Colonic mucosa (tissue), 4 donors: ENCODE measurements at regions of chr3 and their contacts with region 1.

Region 1: DNA sequence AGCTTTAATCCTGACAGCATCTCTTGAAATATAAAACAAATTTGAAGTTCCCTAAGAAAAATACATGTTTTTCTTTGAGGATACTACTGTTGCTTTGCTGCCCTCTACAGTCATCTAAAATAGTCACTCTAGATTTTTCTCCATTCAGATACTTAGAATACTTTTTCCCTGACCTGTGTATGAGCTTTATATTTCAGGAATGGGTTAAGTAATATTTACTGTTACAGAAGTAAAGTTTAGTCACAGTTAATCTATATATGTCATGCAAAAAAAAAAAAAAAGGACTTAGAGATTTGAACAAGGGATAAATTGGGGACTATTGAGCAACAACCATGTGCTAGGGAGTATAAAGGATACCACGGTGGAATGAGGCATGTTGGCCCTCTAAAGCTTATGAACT is 8.8 kb downstream of the NECTIN3 start:
- DNase-seq: no peak
- H3K4me3 ChIP-seq: no peak overlapping the region
- H3K27ac ChIP-seq: no peak overlapping the region
- H3K4me1 ChIP-seq: no peaks in the 10 kb centered on the region
- H3K27me3 ChIP-seq: no peaks in the 10 kb centered on the region
- CTCF ChIP-seq: peak; percentile 39

Region 2: GRCh38 chr3:109731620-109732473 is 1348.6 kb before region 1 on chr3:
- intact Hi-C with region 1: loop called (anchors 5 kb)
- DNase-seq: peak; percentile 60
- H3K4me3 ChIP-seq: no peak overlapping the region
- H3K27ac ChIP-seq: no peak overlapping the region
- H3K4me1 ChIP-seq: no peaks in the 10 kb centered on the region
- H3K27me3 ChIP-seq: no peaks in the 10 kb centered on the region
- CTCF ChIP-seq: peak; percentile 85

Region 3: GRCh38 chr3:110314512-110315114 is 765.8 kb before region 1 on chr3:
- intact Hi-C with region 1: loop called (anchors 10 kb)
- DNase-seq: peak; percentile 69
- H3K4me3 ChIP-seq: no peak overlapping the region
- H3K27ac ChIP-seq: no peak overlapping the region
- H3K4me1 ChIP-seq: no peaks in the 10 kb centered on the region
- H3K27me3 ChIP-seq: no peaks in the 10 kb centered on the region
- CTCF ChIP-seq: peak; percentile 74